Ascending aorta (tissue), 2 donors: ENCODE measurements at regions of chr17 and their contacts with region 1.

Region 1: DNA sequence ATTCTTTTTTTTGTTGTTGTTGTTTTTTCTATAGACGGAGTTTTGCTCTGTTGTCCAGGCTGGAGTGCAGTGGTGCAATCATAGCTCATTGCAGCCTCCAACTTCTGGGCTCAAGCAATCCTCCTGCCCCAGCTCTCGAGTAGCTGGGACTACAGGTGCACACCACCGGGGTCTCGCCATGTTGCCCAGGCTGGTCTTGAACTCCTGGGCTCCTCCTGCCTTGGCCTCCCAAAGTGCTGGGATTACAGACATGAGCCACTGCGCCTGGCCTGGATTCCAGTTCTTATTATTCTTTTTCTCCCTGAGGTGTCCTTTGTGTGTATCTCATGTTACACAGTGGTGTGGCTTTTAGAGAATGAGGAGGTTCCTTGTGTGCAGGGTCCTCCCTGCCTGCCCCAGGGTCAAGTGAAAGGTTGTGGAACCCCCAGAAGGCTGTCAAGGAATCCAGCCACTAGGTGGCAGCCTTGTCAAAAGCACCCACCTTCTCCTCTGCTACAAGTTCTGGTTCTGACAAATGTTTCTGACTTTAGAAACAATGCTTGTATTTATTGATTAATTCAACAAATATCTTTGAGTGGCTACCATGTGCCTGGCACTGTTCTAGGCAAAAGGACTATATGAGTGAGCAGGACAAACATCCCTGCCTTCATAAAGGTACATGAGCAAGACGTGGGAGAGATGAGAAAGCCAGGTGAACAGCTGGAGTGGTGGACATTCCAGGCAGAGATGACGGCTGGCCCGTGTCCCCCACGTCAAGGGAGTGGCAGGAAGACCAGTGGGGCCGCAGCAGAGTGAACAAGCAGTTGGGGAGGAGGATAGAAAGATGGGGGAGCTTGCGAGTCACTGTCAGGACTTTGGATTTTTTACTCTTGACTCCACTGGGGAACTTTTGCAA is 112.4 kb downstream of the SPECC1 start:
- DNase-seq: peak in 1 of 2 donors; percentile 82
- H3K4me3 ChIP-seq: peak overlapping the region in 1 of 2 donors; percentile 36
- H3K27ac ChIP-seq: peak overlapping the region; percentile 48 to 62
- H3K4me1 ChIP-seq: peaks cover 4 to 21% of the 10 kb centered on the region in 2 donors
- H3K27me3 ChIP-seq: no peaks in the 10 kb centered on the region
- CTCF ChIP-seq: peak; percentile 83 to 90 (median 88)

Region 2: DNA sequence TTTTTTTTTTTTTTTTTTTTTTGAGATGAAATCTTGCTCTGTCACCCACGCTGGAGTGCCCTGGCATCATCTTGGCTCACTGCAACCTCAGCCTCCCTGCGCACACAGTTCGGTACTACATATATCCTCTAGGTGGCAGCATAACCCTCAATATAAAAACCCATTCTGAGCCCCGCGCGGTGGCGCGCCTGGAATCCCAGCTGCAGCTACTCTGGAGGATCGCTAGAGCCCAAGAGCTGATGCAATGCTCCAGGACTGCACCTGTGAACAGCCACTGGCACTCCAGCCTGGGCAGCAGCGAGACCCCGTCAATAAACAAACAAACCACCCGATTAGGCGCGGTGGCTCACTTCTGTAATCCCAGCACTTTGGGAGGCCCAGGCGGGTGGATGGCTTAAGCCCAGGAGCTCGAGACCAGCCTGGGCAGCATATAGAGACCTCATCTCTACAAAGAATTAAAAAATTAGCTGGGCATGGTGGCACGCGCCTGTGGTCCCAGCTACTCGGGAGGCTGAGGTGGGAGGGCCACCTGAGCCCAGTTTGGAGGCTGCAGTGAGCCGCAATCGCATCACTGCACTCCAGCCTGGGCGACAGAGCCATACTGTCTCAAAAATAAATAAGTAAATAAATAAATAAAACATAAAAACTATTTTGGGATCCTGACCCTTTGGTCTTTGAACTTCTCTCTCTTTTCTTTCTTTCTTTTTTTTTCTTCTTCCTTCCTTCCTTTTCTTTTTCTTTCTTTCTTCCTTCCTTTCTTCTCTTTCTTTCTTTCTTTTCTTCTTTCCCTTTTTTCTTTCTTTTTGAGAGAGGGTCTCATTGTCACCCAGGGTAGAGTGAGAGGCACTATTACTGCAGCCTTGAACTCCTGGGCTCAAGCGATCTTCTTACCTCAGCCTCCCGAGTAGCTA is 128.5 kb before region 1 on chr17:
- intact Hi-C with region 1: loop called (anchors 2 kb)
- DNase-seq: peak; percentile 53 to 95
- H3K4me3 ChIP-seq: peak overlapping the region; percentile 24 to 50
- H3K27ac ChIP-seq: peak overlapping the region in 1 of 2 donors; percentile 33
- H3K4me1 ChIP-seq: peaks cover 2 to 3% of the 10 kb centered on the region in 2 donors
- H3K27me3 ChIP-seq: no peaks in the 10 kb centered on the region
- CTCF ChIP-seq: peak; percentile 63 to 78 (median 72)

Region 3: GRCh38 chr17:20009302-20010098 is 112.1 kb before region 1 on chr17 and contains the start of gene SPECC1:
- intact Hi-C with region 1: loop called (anchors 5 kb)
- DNase-seq: peak; percentile 50 to 93
- H3K4me3 ChIP-seq: peak within 1 kb of the TSS; percentile 74 to 85
- H3K27ac ChIP-seq: peak within 1 kb of the TSS; percentile 85 to 91
- H3K4me1 ChIP-seq: no peaks in the 10 kb centered on the region
- H3K27me3 ChIP-seq: no peaks in the 10 kb centered on the region
- CTCF ChIP-seq: peak in 1 of 3 experiments; percentile 99
- total RNA-seq, gene SPECC1: 76.4 TPM

Region 4: GRCh38 chr17:20063665-20064648 is 57.6 kb before region 1 on chr17:
- intact Hi-C with region 1: loop called (anchors 2 kb)
- DNase-seq: peak; percentile 66 to 96
- H3K4me3 ChIP-seq: peak overlapping the region in 1 of 2 donors; percentile 39
- H3K27ac ChIP-seq: peak overlapping the region; percentile 77 to 91
- H3K4me1 ChIP-seq: peaks cover 16 to 39% of the 10 kb centered on the region in 2 donors
- H3K27me3 ChIP-seq: no peaks in the 10 kb centered on the region
- CTCF ChIP-seq: no peak

Region 5: GRCh38 chr17:20226814-20227482 is 105.3 kb after region 1 on chr17:
- intact Hi-C with region 1: loop called (anchors 1 kb)
- DNase-seq: peak in 1 of 2 donors; percentile 90
- H3K4me3 ChIP-seq: peak overlapping the region in 1 of 2 donors; percentile 25
- H3K27ac ChIP-seq: peak overlapping the region; percentile 68 to 74
- H3K4me1 ChIP-seq: peaks cover 7 to 34% of the 10 kb centered on the region in 2 donors
- H3K27me3 ChIP-seq: no peaks in the 10 kb centered on the region
- CTCF ChIP-seq: peak; percentile 64 to 87 (median 79)

Region 6: DNA sequence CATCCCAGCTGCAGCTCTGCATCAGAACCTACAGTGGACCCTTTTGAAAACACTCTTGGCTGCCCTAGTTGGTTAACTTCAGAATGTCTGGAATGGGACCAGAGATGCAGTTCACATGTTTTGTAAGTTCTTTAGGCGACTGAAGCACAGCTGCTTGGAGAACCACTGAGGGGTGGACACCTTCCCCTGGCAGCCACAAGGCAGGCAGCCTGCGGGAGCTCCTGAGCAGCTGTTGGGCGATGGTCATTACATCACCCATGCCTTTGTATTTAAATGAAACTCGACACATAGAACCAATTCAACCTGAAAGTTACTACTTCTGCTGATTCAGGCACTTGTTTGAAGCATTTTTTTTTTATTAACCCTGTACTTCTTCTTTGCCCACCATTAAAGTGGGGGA is 194.2 kb after region 1 on chr17:
- intact Hi-C with region 1: loop called (anchors 1 kb)
- DNase-seq: no peak
- H3K4me3 ChIP-seq: no peak overlapping the region
- H3K27ac ChIP-seq: no peak overlapping the region
- H3K4me1 ChIP-seq: peaks cover 0 to 5% of the 10 kb centered on the region in 2 donors
- H3K27me3 ChIP-seq: no peaks in the 10 kb centered on the region
- CTCF ChIP-seq: no peak